ENCODE measurements at regions of chr16 and their contacts with region 1.

Region 1: GRCh38 chr16:2867987-2868789 is 10.2 kb upstream of the PRSS22 start:
- DNase-seq: peak; percentile 86 to 98 (median 92)
- ATAC-seq: peak; percentile 97
- H3K4me3 ChIP-seq: peak overlapping the region; percentile 79
- H3K4me3 Mint-ChIP-seq: peak overlapping the region; percentile 84
- H3K27ac ChIP-seq: peak overlapping the region; percentile 73 to 77
- H3K27ac Mint-ChIP-seq: peak overlapping the region; percentile 79
- H3K4me1 ChIP-seq: peaks cover 18% of the 10 kb centered on the region
- H3K4me1 Mint-ChIP-seq: peaks cover 20% of the 10 kb centered on the region
- H3K27me3 ChIP-seq: no peaks in the 10 kb centered on the region
- H3K27me3 Mint-ChIP-seq: no peaks in the 10 kb centered on the region
- CTCF ChIP-seq: peak; percentile 96

Region 2: GRCh38 chr16:2777231-2777902 is 90.8 kb before region 1 on chr16 and contains the start of gene ELOB:
- CTCF ChIA-PET with region 1: interaction called, 16 read pairs
- POLR2A ChIA-PET with region 1: interaction called, 8 read pairs
- intact Hi-C with region 1: loop called (anchors 2 to 5 kb)
- DNase-seq: peak; percentile 79 to 96 (median 89)
- ATAC-seq: peak; percentile 89
- H3K4me3 ChIP-seq: peak within 1 kb of the TSS; percentile 88
- H3K4me3 Mint-ChIP-seq: peak within 1 kb of the TSS; percentile 98
- H3K27ac ChIP-seq: peak within 1 kb of the TSS; percentile 97 to 98
- H3K27ac Mint-ChIP-seq: peak within 1 kb of the TSS; percentile 100
- H3K4me1 ChIP-seq: peaks cover 49% of the 10 kb centered on the region
- H3K4me1 Mint-ChIP-seq: peaks cover 36% of the 10 kb centered on the region
- H3K27me3 ChIP-seq: no peaks in the 10 kb centered on the region
- H3K27me3 Mint-ChIP-seq: no peaks in the 10 kb centered on the region
- CTCF ChIP-seq: no peak
- total RNA-seq, gene ELOB: 102 to 103 TPM

Region 3: DNA sequence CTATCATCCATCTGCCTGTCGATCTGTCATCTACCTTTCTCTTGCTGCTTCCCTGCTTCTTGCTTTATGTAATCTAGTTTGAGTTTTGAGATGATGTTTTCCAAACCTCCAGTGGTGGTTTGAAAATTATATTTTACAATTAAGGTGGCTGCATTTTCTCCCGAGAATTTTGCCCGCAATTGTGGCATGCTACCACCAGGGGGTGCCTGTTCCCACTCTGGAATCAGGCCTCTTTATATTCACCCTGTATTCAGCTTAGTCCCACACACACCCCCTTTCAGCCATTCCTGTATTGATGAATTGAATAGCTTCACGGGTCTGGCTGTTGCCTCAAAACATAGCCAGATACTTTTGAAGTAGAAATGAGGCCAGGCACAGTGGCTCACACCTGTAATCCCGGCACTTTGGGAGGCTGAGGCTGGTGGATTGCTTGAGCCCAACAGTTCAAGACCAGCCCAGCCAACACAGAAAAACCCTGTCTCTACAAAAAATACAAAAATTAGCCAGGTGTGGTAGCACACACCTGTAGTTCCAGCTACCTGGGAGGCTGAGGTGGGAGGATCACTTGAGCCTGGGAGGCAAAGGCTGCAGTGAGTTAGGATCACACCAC is 13.4 kb before region 1 on chr16:
- CTCF ChIA-PET with region 1: interaction called, 14 read pairs
- POLR2A ChIA-PET with region 1: interaction called, 4 read pairs
- intact Hi-C with region 1: no loop called
- DNase-seq: peak in 1 of 14 experiments; percentile 21
- ATAC-seq: no peak
- H3K4me3 ChIP-seq: no peak overlapping the region
- H3K4me3 Mint-ChIP-seq: no peak overlapping the region
- H3K27ac ChIP-seq: no peak overlapping the region
- H3K27ac Mint-ChIP-seq: no peak overlapping the region
- H3K4me1 ChIP-seq: peaks cover 25% of the 10 kb centered on the region
- H3K4me1 Mint-ChIP-seq: peaks cover 5% of the 10 kb centered on the region
- H3K27me3 ChIP-seq: peaks cover 3 to 7% of the 10 kb centered on the region in 2 experiments
- H3K27me3 Mint-ChIP-seq: peaks cover 13% of the 10 kb centered on the region
- CTCF ChIP-seq: no peak

Region 4: DNA sequence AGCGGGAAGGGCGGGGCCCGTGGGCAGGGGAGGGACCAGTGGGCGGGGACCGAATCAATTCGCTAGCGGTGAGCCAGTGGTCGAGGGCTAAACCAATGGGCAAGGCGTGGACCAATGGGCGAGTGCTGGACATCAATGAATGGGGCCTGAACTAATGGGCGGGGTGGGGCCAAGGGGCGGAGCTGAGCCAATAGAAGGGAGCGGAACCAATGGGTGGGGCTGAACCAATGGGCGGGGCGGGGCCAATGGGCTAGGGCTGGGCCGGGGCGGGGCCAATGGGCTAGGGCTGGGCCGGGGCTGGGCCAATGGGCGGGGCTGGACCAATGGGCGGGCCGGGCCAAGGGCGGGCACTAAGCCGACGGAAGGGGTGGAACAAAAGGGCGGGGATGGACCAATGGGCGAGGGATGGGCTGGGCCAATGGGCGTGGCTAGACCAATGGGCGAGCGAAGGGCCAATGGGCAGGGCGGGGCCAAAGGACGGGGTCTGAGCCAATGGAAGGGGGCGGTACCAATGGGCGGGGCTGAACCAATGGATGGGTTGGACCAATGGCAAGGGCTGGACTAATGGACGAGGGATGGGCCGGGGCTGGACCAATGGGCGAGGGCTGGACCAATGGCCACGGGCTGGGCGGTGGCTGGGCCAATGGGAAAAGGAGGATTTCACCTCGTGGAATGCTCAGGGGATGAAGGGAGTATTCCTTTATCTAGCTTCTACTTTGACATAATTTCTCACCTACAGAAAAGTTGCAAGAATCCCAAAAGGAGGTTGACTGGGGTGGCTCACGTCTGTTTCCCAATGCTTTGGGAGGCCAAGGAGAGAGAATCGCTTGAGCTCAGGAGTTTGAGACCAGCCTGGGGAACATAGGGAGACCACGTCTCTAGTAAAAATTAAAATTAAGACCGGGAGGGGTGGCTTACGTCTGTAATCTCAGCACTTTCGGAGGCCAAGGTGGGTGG is 37.5 kb after region 1 on chr16:
- CTCF ChIA-PET with region 1: interaction called, 10 read pairs
- POLR2A ChIA-PET with region 1: no interaction called
- intact Hi-C with region 1: no loop called
- DNase-seq: peak; percentile 59 to 97 (median 83)
- ATAC-seq: peak; percentile 77
- H3K4me3 ChIP-seq: peak overlapping the region; percentile 94
- H3K4me3 Mint-ChIP-seq: peak overlapping the region; percentile 94
- H3K27ac ChIP-seq: peak overlapping the region in 1 of 2 donors; percentile 10
- H3K27ac Mint-ChIP-seq: no peak overlapping the region
- H3K4me1 ChIP-seq: peaks cover 32% of the 10 kb centered on the region
- H3K4me1 Mint-ChIP-seq: peaks cover 37% of the 10 kb centered on the region
- H3K27me3 ChIP-seq: no peaks in the 10 kb centered on the region
- H3K27me3 Mint-ChIP-seq: no peaks in the 10 kb centered on the region
- CTCF ChIP-seq: no peak

Region 5: GRCh38 chr16:2926650-2927646 is 58.8 kb after region 1 on chr16:
- CTCF ChIA-PET with region 1: interaction called, 20 read pairs
- POLR2A ChIA-PET with region 1: no interaction called
- intact Hi-C with region 1: no loop called
- DNase-seq: peak; percentile 75 to 95 (median 84)
- ATAC-seq: peak; percentile 100
- H3K4me3 ChIP-seq: no peak overlapping the region
- H3K4me3 Mint-ChIP-seq: no peak overlapping the region
- H3K27ac ChIP-seq: no peak overlapping the region
- H3K27ac Mint-ChIP-seq: peak overlapping the region; percentile 41
- H3K4me1 ChIP-seq: peaks cover 12% of the 10 kb centered on the region
- H3K4me1 Mint-ChIP-seq: peaks cover 13% of the 10 kb centered on the region
- H3K27me3 ChIP-seq: no peaks in the 10 kb centered on the region
- H3K27me3 Mint-ChIP-seq: no peaks in the 10 kb centered on the region
- CTCF ChIP-seq: peak; percentile 95

Measured in CD4-positive, alpha-beta T cell (primary cell).